AG04450 (cell line): ENCODE measurements at regions of chr3 and their contacts with region 1.

Region 1: DNA sequence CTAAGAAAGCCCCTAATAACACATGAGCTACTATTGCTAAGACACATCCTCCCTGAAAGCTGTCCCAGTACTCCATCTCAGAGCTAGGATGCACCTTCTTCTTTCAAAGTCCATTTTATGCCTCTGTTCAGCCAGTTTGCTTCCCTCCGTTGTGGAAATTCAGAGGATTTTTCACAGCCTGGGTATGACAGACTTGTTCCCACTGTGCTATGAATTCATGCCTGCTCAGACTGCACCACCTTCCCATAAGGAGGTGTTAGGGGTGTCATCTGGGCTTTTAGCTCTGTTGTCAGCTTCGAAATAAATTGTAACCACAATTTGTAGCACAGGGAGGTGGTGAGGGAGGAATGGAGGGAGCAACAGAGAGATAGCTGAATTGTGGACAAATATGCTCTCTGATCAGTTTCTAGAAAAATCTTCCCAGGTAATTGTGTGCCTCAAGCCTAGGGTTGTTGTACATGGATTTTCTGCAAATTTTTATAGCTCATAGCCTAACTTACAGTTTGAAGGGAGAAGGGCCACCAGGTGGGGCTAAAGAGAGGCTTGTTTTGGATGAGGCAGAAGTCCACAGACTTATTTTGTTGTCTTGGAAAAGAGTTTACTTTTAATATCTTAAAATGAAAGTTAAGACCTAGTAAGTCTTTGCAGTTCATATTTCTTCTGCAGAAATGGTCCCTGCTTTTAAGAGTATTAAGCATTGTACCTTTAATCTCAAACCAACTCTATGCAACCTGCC is 462.0 kb downstream of the PDCD6IP start:
- DNase-seq: peak; percentile 1
- H3K4me3 ChIP-seq: no peak overlapping the region
- H3K27ac ChIP-seq: no peak overlapping the region
- H3K27me3 ChIP-seq: no peaks in the 10 kb centered on the region
- CTCF ChIP-seq: peak; percentile 76

Region 2: GRCh38 chr3:33980252-33980651 is 280.2 kb before region 1 on chr3:
- CTCF ChIA-PET with region 1: interaction called, 11 read pairs
- POLR2A ChIA-PET with region 1: no interaction called
- DNase-seq: peak; percentile 67
- H3K4me3 ChIP-seq: no peak overlapping the region
- H3K27ac ChIP-seq: no peak overlapping the region
- H3K27me3 ChIP-seq: no peaks in the 10 kb centered on the region
- CTCF ChIP-seq: peak; percentile 76

Region 3: DNA sequence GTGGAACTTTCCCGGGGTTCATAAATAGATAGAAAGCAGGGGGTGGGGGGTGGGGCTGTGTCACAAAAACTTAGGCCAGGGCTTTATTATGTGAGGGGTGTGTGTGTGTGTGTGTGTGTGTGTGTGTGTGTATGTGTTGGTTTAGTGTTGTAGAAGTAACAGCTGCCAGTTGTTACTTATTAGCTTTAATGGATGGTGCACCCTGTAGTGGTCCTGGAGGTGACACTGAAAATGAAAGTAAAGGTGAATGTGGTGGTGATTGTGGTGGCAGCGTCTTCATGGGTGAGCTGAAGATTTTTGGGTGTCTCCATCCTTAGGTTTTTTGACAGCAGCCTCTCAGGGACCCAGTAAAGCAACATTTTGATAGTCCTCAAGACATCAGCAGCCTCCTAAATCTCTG is 12.1 kb before region 1 on chr3:
- CTCF ChIA-PET with region 1: interaction called, 26 read pairs
- POLR2A ChIA-PET with region 1: no interaction called
- DNase-seq: no peak
- H3K4me3 ChIP-seq: no peak overlapping the region
- H3K27ac ChIP-seq: no peak overlapping the region
- H3K27me3 ChIP-seq: no peaks in the 10 kb centered on the region
- CTCF ChIP-seq: no peak

Region 4: DNA sequence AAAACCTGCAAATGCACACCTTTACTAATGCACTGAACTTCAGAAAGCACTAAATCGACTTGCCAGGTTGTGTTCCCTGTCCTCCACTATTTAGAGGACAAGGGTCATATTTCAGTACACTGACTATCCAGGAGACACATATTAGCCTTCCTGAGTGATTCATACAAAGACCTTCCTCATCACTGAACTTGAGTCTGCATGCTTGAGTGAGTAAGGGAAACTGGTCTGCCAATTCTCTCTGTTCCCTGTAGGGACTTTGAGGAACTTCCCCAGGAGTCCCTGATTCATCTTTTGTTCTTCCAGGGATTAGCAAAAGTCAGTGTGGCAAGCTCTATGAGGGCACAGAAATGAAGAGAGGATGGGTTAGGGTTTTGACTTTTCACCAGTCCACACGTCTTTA is 103.9 kb after region 1 on chr3:
- CTCF ChIA-PET with region 1: no interaction called
- POLR2A ChIA-PET with region 1: no interaction called
- DNase-seq: no peak
- H3K4me3 ChIP-seq: no peak overlapping the region
- H3K27ac ChIP-seq: no peak overlapping the region
- H3K27me3 ChIP-seq: no peaks in the 10 kb centered on the region
- CTCF ChIP-seq: no peak